Mammary epithelial cell (primary cell): ENCODE measurements at regions of chr6 and their contacts with region 1.

Region 1: DNA sequence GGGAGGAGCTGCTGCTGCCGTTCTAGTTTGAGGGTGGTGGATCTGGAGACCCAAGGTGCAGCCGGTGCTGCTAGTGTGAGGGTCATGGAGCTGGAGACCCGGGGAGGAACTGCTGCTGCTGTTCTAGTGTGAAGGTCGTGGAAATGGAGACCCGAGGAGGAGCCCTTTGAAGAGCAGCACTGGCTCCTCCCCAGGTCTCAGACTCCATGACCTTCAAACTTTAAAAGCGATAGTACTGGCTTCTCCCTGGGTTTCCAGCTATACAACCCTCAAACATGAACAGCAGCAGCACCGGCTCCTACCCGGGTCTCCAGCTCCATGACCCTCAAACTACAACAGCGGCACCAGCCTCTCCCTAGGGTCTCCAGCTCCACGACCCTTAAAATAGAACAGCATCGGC is 15.5 kb downstream of the ULBP3 start:
- DNase-seq: no peak
- H3K4me3 ChIP-seq: no peak overlapping the region
- H3K27ac ChIP-seq: no peak overlapping the region
- H3K4me1 ChIP-seq: no peaks in the 10 kb centered on the region
- H3K27me3 ChIP-seq: peaks cover 4% of the 10 kb centered on the region
- CTCF ChIP-seq: no peak

Region 2: DNA sequence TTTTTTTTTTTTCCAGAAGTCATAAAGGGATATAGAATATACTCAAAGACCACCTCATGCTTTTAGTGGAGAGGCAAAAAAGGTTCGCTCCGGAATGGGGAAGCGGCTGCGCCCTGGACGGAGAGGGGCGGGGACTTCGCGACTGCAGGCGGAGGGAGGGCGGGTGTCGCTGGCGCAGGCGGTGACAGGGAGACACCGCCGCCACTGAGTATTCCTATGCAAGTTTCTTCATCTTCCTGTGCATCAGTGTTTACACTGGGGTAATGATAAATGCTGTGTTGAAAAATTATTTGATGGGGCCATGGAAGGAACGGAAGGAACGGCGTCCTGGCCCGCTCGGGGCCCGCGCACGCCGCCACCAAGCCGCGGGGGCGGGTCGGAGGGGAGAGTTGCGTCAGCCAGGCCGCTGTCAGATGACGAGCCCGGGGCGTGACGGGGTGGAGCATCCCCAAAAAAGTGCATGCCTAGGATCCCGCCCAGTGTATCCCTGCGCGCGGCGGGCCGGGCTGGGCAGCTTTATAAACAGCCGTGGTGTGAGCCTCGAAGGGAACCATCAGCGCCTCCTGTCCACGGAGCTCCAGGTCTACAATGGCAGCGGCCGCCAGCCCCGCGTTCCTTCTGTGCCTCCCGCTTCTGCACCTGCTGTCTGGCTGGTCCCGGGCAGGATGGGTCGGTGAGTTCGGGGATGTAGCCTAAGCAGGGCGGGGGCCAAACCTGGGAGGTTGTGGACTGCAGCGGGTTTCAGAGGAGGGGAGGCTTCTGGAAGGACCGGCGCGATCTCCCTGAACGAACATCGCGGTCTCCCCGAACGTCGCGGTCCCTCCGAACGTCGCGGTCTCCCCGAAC is 89.8 kb before region 1 on chr6 and contains the start of gene ULBP1:
- CTCF ChIA-PET with region 1: no interaction called
- dilution Hi-C with region 1: loop called (anchors 5 kb)
- in situ Hi-C with region 1: no loop called
- intact Hi-C with region 1: no loop called
- DNase-seq: peak; percentile 83
- H3K4me3 ChIP-seq: peak within 1 kb of the TSS; percentile 39 to 60 (median 53)
- H3K27ac ChIP-seq: peak within 1 kb of the TSS; percentile 41
- H3K4me1 ChIP-seq: peaks cover 22% of the 10 kb centered on the region
- H3K27me3 ChIP-seq: peaks cover 18% of the 10 kb centered on the region
- CTCF ChIP-seq: peak in 1 of 2 donors; percentile 29
- total RNA-seq, gene ULBP1: 5.2 to 23.5 TPM

Region 3: GRCh38 chr6:150220634-150221551 is 167.4 kb after region 1 on chr6:
- CTCF ChIA-PET with region 1: no interaction called
- dilution Hi-C with region 1: no loop called
- in situ Hi-C with region 1: no loop called
- intact Hi-C with region 1: no loop called
- DNase-seq: no peak
- H3K4me3 ChIP-seq: no peak overlapping the region
- H3K27ac ChIP-seq: no peak overlapping the region
- H3K4me1 ChIP-seq: no peaks in the 10 kb centered on the region
- H3K27me3 ChIP-seq: no peaks in the 10 kb centered on the region
- CTCF ChIP-seq: no peak